Activated T-helper 1 cell treated with anti-CD3 and anti-CD28 coated beads, Interleukin-12 subunit alpha, Interleukin-12 subunit beta, Interleukin-2, Interleukin-4 antibody, amounts not matched to agents 30 ng/mL and 10 ng/mL and 1 ng/mL, durations not matched to agents 14 hours and 24 hours and 36 hours (primary cell): ENCODE measurements at regions of chr19 and their contacts with region 1.

Region 1: GRCh38 chr19:8487137-8487851 is 15.1 kb downstream of the PRAM1 start:
- DNase-seq: peak; percentile 21
- H3K4me3 Mint-ChIP-seq: peak overlapping the region; percentile 56
- H3K27ac Mint-ChIP-seq: peak overlapping the region; percentile 82
- H3K4me1 Mint-ChIP-seq: peaks cover 21% of the 10 kb centered on the region
- H3K27me3 Mint-ChIP-seq: no peaks in the 10 kb centered on the region

Region 2: GRCh38 chr19:8261347-8262310 is 225.7 kb before region 1 on chr19:
- intact Hi-C with region 1: loop called (anchors 10 kb)
- DNase-seq: no peak
- H3K4me3 Mint-ChIP-seq: no peak overlapping the region
- H3K27ac Mint-ChIP-seq: no peak overlapping the region
- H3K4me1 Mint-ChIP-seq: peaks cover 19% of the 10 kb centered on the region
- H3K27me3 Mint-ChIP-seq: no peaks in the 10 kb centered on the region

Region 3: GRCh38 chr19:8387688-8388611 is 99.3 kb before region 1 on chr19:
- intact Hi-C with region 1: no loop called
- DNase-seq: no peak
- H3K4me3 Mint-ChIP-seq: peak overlapping the region; percentile 59
- H3K27ac Mint-ChIP-seq: no peak overlapping the region
- H3K4me1 Mint-ChIP-seq: peaks cover 17% of the 10 kb centered on the region
- H3K27me3 Mint-ChIP-seq: peaks cover 2% of the 10 kb centered on the region

Region 4: DNA sequence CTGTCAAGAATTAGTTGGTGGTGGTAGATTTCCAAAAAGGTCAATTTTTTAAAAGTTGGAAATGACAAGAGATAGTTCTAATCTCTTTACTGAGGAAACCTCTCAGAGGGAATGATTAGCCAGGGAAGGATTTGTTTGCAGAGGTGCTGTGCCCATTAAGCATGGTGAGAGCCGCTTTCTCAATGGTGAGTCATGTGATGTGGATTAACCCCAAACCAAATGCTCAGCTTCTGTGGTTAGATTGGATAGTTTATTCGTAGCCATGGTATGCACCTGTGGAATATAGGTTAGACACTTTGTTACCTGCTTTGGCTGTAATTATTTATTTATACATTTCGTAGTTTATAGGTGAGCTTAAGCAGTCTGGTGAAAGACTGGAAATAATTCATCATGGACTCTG is 35.4 kb before region 1 on chr19:
- intact Hi-C with region 1: loop called (anchors 5 kb)
- DNase-seq: no peak
- H3K4me3 Mint-ChIP-seq: no peak overlapping the region
- H3K27ac Mint-ChIP-seq: no peak overlapping the region
- H3K4me1 Mint-ChIP-seq: peaks cover 72% of the 10 kb centered on the region
- H3K27me3 Mint-ChIP-seq: no peaks in the 10 kb centered on the region